ENCODE measurements at regions of chr3 and their contacts with region 1.

Region 1: GRCh38 chr3:119042164-119042563 is 7.5 kb upstream of the IGSF11 start:
- DNase-seq: no peak
- ATAC-seq: no peak
- H3K4me3 ChIP-seq: no peak overlapping the region
- H3K4me3 Mint-ChIP-seq: no peak overlapping the region
- H3K27ac ChIP-seq: no peak overlapping the region
- H3K27ac Mint-ChIP-seq: no peak overlapping the region
- H3K4me1 ChIP-seq: no peaks in the 10 kb centered on the region
- H3K4me1 Mint-ChIP-seq: no peaks in the 10 kb centered on the region
- H3K27me3 ChIP-seq: peaks cover 3 to 6% of the 10 kb centered on the region in 2 experiments
- H3K27me3 Mint-ChIP-seq: peaks cover 39 to 42% of the 10 kb centered on the region in 2 donors

Region 2: GRCh38 chr3:118760585-118761290 is 281.4 kb before region 1 on chr3:
- CTCF ChIA-PET with region 1: interaction called in 1 of 2 experiments, 11 read pairs
- POLR2A ChIA-PET with region 1: no interaction called
- DNase-seq: no peak
- ATAC-seq: no peak
- H3K4me3 ChIP-seq: no peak overlapping the region
- H3K4me3 Mint-ChIP-seq: no peak overlapping the region
- H3K27ac ChIP-seq: no peak overlapping the region
- H3K27ac Mint-ChIP-seq: no peak overlapping the region
- H3K4me1 ChIP-seq: no peaks in the 10 kb centered on the region
- H3K4me1 Mint-ChIP-seq: no peaks in the 10 kb centered on the region
- H3K27me3 ChIP-seq: no peaks in the 10 kb centered on the region
- H3K27me3 Mint-ChIP-seq: no peaks in the 10 kb centered on the region